Psoas muscle (tissue), 8 donors: ENCODE measurements at regions of chr4 and their contacts with region 1.

Region 1: DNA sequence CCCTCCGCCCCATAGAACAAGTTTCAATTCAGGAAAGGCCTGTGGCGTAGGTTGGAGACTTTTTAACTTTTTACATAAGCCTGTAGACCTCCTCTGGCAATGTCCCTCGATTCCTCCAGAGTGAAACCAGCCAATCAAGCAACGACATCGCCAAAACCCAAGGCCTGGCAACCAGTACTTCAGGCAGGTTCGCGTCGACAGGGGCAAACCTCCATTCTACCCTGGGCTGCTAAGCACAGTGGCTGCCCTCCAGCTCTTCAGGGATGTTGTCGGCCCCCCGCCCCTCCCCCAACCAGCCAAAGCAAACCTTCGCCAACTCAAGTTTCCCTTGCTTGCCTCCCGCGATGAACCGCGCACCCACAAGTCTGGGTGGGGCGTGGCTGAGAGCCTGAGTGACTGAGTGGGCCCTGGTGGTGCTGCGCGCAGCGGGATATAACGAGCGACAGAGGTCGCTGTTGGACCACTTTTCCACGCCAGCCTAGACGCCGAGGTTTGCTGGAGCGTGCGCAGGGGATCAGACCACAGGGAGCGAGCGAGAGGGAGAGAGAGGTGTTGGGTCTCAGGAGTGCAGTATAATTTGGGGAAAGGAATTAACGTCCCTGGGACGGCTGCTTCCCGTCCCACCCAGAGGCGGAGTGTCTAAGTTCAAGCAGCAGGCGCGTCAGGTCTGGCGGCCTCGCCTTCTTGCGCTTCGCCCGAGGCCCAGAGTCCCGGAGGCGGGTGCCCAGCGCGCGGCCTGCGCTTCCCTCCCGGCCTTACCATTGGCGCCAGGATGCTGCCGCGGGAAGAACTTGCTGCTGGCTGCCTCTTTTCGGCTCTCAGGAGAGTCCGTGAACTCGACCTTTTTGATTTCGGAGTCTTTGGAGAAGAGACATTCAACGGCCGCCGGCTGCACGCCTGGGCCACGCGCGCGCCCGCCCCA is 9.0 kb upstream of the PITX2 start:
- DNase-seq: peak; percentile 79 to 86
- ATAC-seq: peak; percentile 77 to 95 (median 86)
- H3K4me3 ChIP-seq: peak overlapping the region; percentile 84
- H3K27ac ChIP-seq: peak overlapping the region; percentile 88
- H3K4me1 ChIP-seq: peaks cover 10% of the 10 kb centered on the region
- H3K27me3 ChIP-seq: peaks cover 0 to 37% (median 3%) of the 10 kb centered on the region in 3 donors
- CTCF ChIP-seq: peak; percentile 75

Region 2: GRCh38 chr4:110681381-110681780 is 49.5 kb after region 1 on chr4:
- intact Hi-C with region 1: loop called in 1 of 2 experiments (anchors 10 kb)
- DNase-seq: no peak
- ATAC-seq: no peak
- H3K4me3 ChIP-seq: no peak overlapping the region
- H3K27ac ChIP-seq: no peak overlapping the region
- H3K4me1 ChIP-seq: no peaks in the 10 kb centered on the region
- H3K27me3 ChIP-seq: no peaks in the 10 kb centered on the region
- CTCF ChIP-seq: no peak

Region 3: DNA sequence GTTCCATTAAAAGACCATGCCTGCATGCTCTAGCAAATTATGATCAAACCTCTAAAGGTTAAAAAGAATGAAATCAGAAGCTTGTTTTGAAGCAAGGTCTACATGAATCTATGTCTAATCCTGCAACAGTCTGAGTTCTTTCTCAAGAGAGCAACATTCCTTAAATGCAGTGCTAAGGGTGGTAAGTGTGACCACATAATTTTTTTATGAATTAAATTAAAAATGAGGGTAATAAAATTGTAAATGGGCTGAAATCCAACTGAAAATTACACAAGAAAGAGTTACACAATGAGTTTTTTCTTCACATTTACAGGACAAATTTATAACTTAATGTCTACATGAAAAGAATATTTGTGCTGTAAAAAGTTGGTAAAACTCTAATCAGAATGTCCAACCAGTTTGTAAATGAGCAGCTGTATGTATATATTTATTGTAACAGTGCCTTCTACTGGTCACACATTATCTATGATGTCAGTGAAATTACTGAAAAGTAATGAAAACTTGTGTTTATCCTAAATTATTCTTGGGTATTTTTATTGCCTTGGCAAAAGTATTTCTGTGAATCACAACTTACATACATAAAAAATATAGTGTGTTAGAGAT is 327.3 kb after region 1 on chr4:
- intact Hi-C with region 1: loop called (anchors 2 to 5 kb)
- DNase-seq: no peak
- ATAC-seq: peak in 1 of 4 donors; percentile 57
- H3K4me3 ChIP-seq: no peak overlapping the region
- H3K27ac ChIP-seq: no peak overlapping the region
- H3K4me1 ChIP-seq: no peaks in the 10 kb centered on the region
- H3K27me3 ChIP-seq: no peaks in the 10 kb centered on the region
- CTCF ChIP-seq: peak; percentile 51

Region 4: DNA sequence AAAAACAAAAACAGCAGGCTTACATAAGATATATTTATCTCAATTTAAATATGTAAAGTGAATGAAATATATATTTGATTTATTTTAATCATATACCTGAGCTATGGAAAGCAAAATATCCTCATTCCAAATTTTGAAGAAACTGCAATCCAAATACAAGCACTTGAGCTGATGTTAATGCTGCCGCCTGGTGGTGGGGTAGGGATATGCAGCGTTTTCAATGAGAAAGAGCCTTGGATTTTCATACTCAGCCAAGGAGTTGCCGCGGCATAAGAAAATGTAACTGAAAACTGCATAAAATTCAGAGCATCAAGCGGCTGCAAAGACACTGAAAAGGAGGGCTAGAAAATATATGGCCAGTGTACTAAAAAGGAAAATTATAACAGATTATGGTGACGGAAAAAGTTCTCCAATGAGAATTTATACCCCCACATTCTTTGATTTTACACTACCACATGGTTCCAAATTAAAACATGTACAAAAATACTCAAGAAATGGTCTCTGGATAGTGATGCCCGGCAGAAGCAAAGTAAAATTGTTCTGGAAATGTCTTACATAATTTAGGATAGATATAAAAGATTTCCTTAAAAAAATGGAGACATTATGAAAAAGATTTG is 651.3 kb after region 1 on chr4:
- intact Hi-C with region 1: loop called (anchors 5 kb)
- DNase-seq: peak; percentile 47 to 69
- ATAC-seq: peak; percentile 39 to 72 (median 55)
- H3K4me3 ChIP-seq: no peak overlapping the region
- H3K27ac ChIP-seq: no peak overlapping the region
- H3K4me1 ChIP-seq: no peaks in the 10 kb centered on the region
- H3K27me3 ChIP-seq: no peaks in the 10 kb centered on the region
- CTCF ChIP-seq: peak; percentile 84

Region 5: GRCh38 chr4:111631215-111631999 is 999.6 kb after region 1 on chr4:
- intact Hi-C with region 1: loop called in 1 of 2 experiments (anchors 10 kb)
- DNase-seq: no peak
- ATAC-seq: no peak
- H3K4me3 ChIP-seq: no peak overlapping the region
- H3K27ac ChIP-seq: no peak overlapping the region
- H3K4me1 ChIP-seq: no peaks in the 10 kb centered on the region
- H3K27me3 ChIP-seq: no peaks in the 10 kb centered on the region
- CTCF ChIP-seq: no peak